ENCODE measurements at regions of chr3 and their contacts with region 1.

Region 1: GRCh38 chr3:100463002-100463401 is 29.4 kb upstream of the TMEM45A start:
- DNase-seq: peak; percentile 66
- H3K27ac ChIP-seq: no peak overlapping the region
- CTCF ChIP-seq: peak; percentile 73

Region 2: DNA sequence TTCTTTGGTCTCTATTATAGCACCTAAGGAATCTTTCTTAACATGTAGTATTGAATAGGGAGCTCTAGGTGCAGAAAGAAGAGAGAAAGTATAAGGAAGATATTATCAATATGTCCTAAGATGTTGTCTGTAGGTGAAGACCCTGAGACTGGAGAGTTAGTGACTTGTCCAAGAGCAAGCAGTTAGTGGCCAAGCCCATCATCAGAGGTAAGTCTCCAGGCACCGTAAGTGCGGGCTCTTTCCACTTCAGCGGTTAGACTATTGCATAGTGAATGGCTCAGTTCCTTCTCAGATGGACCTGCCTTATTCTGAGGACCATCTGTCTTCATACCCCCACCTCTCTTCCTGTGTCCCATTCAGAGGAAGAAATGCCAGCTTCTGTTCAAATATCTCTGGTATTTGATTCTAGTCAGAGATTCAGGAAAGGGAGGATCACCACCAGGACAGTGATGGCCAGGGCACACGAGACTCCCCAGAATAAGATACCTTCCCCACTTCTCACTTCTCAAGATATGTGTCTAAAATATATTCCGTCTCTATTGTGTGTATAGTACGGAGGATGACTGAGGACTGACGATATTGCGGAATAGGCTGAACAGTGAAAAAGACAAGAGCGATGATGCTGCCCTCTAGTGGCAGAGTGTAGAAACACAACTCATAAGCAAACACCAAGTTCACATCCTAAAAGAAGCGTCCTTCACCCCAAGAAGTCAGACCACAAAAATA is 127.3 kb after region 1 on chr3:
- CTCF ChIA-PET with region 1: interaction called, 46 read pairs
- POLR2A ChIA-PET with region 1: no interaction called
- DNase-seq: peak; percentile 68
- H3K27ac ChIP-seq: no peak overlapping the region
- CTCF ChIP-seq: peak; percentile 88

Region 3: GRCh38 chr3:100600181-100601042 is 137.4 kb after region 1 on chr3:
- CTCF ChIA-PET with region 1: interaction called, 12 read pairs
- POLR2A ChIA-PET with region 1: no interaction called
- DNase-seq: peak; percentile 68
- H3K27ac ChIP-seq: peak overlapping the region; percentile 90
- CTCF ChIP-seq: no peak